Dendritic cell treated with granulocyte-macrophage colony-stimulating factor and Interleukin-4, amounts not matched to agents 40 ng/mL and 50 ng/mL, for 4 days (primary cell): ENCODE measurements at regions of chr1 and their contacts with region 1.

Region 1: GRCh38 chr1:225318706-225319575 is 108.9 kb downstream of the LBR start:
- H3K4me3 Mint-ChIP-seq: no peak overlapping the region
- H3K27ac Mint-ChIP-seq: no peak overlapping the region
- H3K4me1 Mint-ChIP-seq: peaks cover 15% of the 10 kb centered on the region
- H3K27me3 Mint-ChIP-seq: no peaks in the 10 kb centered on the region

Region 2: DNA sequence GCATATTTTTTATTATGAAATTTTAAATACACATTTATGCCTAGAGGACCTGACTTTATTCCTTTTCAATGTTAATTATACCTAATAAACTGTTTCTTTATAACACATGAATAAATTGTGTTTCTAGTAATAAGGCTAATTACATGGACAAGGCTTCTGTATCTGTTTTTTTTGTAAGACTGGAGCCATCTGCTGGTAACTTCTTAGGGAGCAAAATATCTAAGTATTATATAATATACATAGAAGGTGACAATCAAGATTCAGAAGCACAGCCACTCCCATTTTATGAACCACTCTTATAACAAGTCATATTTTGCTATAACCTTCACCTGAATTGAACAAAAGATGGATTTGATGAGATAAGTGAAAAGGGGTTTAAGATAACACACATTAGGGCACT is 24.7 kb after region 1 on chr1:
- intact Hi-C with region 1: loop called (anchors 2 kb)
- H3K4me3 Mint-ChIP-seq: no peak overlapping the region
- H3K27ac Mint-ChIP-seq: no peak overlapping the region
- H3K4me1 Mint-ChIP-seq: no peaks in the 10 kb centered on the region
- H3K27me3 Mint-ChIP-seq: no peaks in the 10 kb centered on the region